ENCODE measurements at regions of chr10 and their contacts with region 1.

Region 1: GRCh38 chr10:102629661-102630614 is 14.3 kb upstream of the TRIM8 start:
- DNase-seq: peak; percentile 60 to 73
- H3K4me3 ChIP-seq: no peak overlapping the region
- H3K27ac ChIP-seq: peak overlapping the region; percentile 71; the same call in 1 of the 2 replicates
- H3K4me1 ChIP-seq: peaks cover 26 to 68% (median 51%) of the 10 kb centered on the region in 4 experiments
- H3K27me3 ChIP-seq: no peaks in the 10 kb centered on the region
- CTCF ChIP-seq: no peak
- EP300 ChIP-seq: no peak
- POLR2A ChIP-seq: peak in 1 of 2 experiments; percentile 73; a peak in 2 of 3 replicates
- RAD21 ChIP-seq: no peak

Region 2: GRCh38 chr10:102534333-102534732 is 95.6 kb before region 1 on chr10:
- CTCF ChIA-PET with region 1: no interaction called
- POLR2A ChIA-PET with region 1: no interaction called
- DNase-seq: no peak
- H3K4me3 ChIP-seq: no peak overlapping the region
- H3K27ac ChIP-seq: no peak overlapping the region
- H3K4me1 ChIP-seq: no peaks in the 10 kb centered on the region
- H3K27me3 ChIP-seq: no peaks in the 10 kb centered on the region
- CTCF ChIP-seq: no peak
- EP300 ChIP-seq: no peak
- POLR2A ChIP-seq: no peak
- RAD21 ChIP-seq: no peak

Region 3: GRCh38 chr10:102596506-102596971 is 33.4 kb before region 1 on chr10:
- CTCF ChIA-PET with region 1: interaction called, 28 read pairs
- POLR2A ChIA-PET with region 1: no interaction called
- DNase-seq: peak in 1 of 2 experiments; percentile 65
- H3K4me3 ChIP-seq: no peak overlapping the region
- H3K27ac ChIP-seq: no peak overlapping the region
- H3K4me1 ChIP-seq: peaks cover 0 to 2% (median 0%) of the 10 kb centered on the region in 4 experiments; a peak in 3 of 7 replicates
- H3K27me3 ChIP-seq: no peaks in the 10 kb centered on the region; a peak in 1 of 7 replicates
- CTCF ChIP-seq: peak; percentile 81 to 97 (median 87)
- EP300 ChIP-seq: no peak
- POLR2A ChIP-seq: no peak
- RAD21 ChIP-seq: peak; percentile 77 to 85

Region 4: GRCh38 chr10:102604379-102604960 is 25.5 kb before region 1 on chr10:
- CTCF ChIA-PET with region 1: interaction called, 11 read pairs
- POLR2A ChIA-PET with region 1: no interaction called
- DNase-seq: no peak
- H3K4me3 ChIP-seq: no peak overlapping the region
- H3K27ac ChIP-seq: no peak overlapping the region
- H3K4me1 ChIP-seq: no peaks in the 10 kb centered on the region
- H3K27me3 ChIP-seq: no peaks in the 10 kb centered on the region
- CTCF ChIP-seq: peak in 1 of 3 experiments; percentile 19; a peak in 1 of 4 replicates
- EP300 ChIP-seq: no peak
- POLR2A ChIP-seq: no peak
- RAD21 ChIP-seq: no peak

Region 5: GRCh38 chr10:102615361-102615760 is 14.6 kb before region 1 on chr10:
- CTCF ChIA-PET with region 1: interaction called, 160 read pairs
- POLR2A ChIA-PET with region 1: interaction called, 21 read pairs
- DNase-seq: peak in 1 of 2 experiments; percentile 86
- H3K4me3 ChIP-seq: no peak overlapping the region
- H3K27ac ChIP-seq: no peak overlapping the region
- H3K4me1 ChIP-seq: peaks cover 0 to 6% (median 2%) of the 10 kb centered on the region in 4 experiments; a peak in 4 of 7 replicates
- H3K27me3 ChIP-seq: no peaks in the 10 kb centered on the region
- CTCF ChIP-seq: peak; percentile 78 to 83 (median 80)
- EP300 ChIP-seq: no peak
- POLR2A ChIP-seq: no peak
- RAD21 ChIP-seq: peak; percentile 71 to 82

Region 6: GRCh38 chr10:102641880-102642735 is 12.2 kb after region 1 on chr10:
- CTCF ChIA-PET with region 1: interaction called, 21 read pairs
- POLR2A ChIA-PET with region 1: interaction called, 51 read pairs
- DNase-seq: peak; percentile 94
- H3K4me3 ChIP-seq: peak overlapping the region; percentile 40 to 81 (median 63)
- H3K27ac ChIP-seq: peak overlapping the region; percentile 80; the same call in 1 of the 2 replicates
- H3K4me1 ChIP-seq: peaks cover 6 to 16% (median 13%) of the 10 kb centered on the region in 4 experiments
- H3K27me3 ChIP-seq: no peaks in the 10 kb centered on the region
- CTCF ChIP-seq: no peak
- EP300 ChIP-seq: no peak
- POLR2A ChIP-seq: peak in 1 of 2 experiments; percentile 77; a peak in 2 of 3 replicates
- RAD21 ChIP-seq: no peak

Measured in H1 (cell line).